ENCODE measurements at regions of chr12 and their contacts with region 1.

Region 1: DNA sequence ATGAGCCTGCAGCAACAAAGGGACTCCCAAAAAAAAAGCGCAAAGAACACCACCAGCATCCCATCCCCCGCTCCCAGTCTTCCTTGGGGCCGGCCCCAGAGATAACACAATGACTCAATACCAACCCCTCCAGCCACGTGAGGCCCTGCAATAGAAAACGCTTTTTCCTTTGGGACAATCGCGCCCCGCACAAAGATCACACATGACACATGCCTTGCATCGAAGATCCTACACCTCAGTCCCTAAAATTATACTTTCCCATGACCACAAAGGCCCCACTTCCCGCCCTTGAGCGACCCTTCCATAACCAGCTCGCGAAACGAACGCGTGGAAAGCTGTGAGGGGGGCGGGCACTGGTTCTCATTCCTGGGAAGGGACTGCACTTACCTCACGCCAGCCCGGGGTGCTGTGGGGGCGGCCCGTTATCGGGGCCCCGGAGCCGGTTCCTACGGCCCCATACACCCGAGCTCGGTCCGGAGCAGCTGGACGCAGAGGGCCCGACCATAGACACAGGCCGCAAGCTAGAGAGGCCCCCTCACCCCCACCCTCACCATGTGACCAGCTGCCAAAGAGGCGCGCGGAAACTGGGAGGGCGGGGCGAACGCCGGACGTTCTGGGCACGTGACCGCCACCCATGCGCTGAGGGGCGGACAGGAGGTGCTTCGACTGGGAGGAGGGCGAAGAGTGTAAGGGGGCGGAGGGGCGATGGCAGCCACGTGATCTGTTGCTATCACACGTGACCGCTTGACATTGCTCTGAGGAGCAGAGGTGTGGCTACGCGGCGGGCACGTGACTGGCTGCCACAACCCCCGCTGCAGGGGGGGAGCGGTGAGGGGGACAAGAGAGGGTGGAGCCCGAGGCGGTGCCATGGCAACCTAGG is at the start of gene CDK4:
- DNase-seq: peak; percentile 99
- ATAC-seq: peak; percentile 85
- H3K4me3 ChIP-seq: peak within 1 kb of the TSS; percentile 79
- H3K27ac ChIP-seq: peak within 1 kb of the TSS; percentile 94
- H3K4me1 ChIP-seq: peaks cover 27% of the 10 kb centered on the region
- H3K27me3 ChIP-seq: no peaks in the 10 kb centered on the region
- CTCF ChIP-seq: no peak
- EP300 ChIP-seq: peak in 1 of 2 experiments; percentile 77; a peak in 2 of 4 replicates
- POLR2A ChIP-seq: peak; percentile 94
- RAD21 ChIP-seq: no peak
- polyA plus RNA-seq, gene CDK4: 26.1 to 45.7 TPM

Region 2: DNA sequence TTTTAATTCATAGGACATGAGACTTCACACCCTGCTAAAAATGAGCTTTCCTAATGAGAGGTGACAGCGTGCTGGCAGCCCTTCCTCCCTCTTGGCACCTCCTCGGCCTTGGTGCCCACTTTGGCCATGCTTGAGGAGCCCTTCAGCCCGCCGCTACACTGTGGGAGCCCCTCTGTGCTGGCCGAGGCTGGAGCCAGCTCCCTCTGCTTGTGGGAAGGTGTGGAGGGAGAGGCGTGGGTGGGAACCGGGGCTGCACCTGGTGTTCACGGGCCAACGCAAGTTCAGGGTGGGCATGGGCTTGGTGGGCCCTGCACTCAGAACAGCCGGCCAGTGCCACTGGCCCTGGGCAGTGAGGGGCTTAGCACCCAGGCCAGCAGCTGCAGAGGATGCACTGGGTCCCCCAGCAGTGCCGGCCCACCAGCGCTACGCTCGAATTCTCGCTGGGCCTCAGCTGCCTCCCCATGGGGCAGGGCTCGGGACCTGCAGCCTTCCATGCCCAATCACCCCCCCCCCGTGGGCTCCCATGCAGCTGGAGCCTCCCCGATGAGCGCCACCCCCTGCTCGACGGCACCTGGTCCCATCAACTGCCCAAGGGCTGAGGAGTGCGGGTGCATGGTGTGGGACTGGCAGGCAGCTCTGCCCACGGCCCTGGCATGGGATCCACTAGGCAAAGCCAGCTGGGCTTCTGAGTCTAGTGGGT is 96.3 kb before region 1 on chr12:
- CTCF ChIA-PET with region 1: no interaction called
- POLR2A ChIA-PET with region 1: no interaction called
- RAD21 ChIA-PET with region 1: no interaction called
- SMC1A ChIA-PET with region 1: no interaction called
- in situ Hi-C with region 1: no loop called
- intact Hi-C with region 1: no loop called
- DNase-seq: no peak
- ATAC-seq: no peak
- H3K4me3 ChIP-seq: no peak overlapping the region
- H3K27ac ChIP-seq: no peak overlapping the region
- H3K4me1 ChIP-seq: no peaks in the 10 kb centered on the region
- H3K27me3 ChIP-seq: no peaks in the 10 kb centered on the region
- CTCF ChIP-seq: no peak
- EP300 ChIP-seq: no peak
- POLR2A ChIP-seq: no peak
- RAD21 ChIP-seq: no peak

Region 3: DNA sequence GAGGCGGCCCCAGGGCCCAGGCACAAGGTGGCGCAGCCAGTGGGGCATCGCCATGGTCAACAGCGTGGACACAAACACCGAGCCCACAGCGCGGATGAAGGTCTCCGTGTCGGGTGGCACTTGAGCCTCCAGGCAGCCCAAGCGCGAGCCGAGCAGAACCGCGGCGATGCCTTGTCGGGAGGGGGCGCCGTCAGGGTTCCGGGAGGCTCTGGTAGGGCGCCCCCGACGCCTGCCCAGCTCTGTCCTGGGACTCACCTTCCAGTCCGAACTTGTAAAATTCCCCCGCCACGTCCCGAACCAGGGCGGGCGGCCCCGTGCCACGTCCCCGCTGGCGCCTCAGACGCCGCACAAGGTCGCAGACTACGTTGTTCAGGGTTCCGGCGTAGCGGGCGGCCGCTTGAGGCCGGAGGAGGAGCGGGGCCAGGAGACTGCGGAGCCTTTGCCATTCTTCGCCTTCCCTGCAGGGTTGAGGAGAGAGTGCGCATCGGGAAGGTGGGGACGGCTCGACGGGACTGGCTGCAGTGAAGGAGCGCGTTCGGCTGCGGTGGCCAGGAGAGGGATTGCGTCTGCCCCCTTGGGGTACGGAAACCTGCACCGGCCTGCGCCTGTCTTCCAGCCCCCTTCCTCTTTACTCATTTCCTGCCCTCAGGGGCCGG is 13.1 kb after region 1 on chr12:
- CTCF ChIA-PET with region 1: interaction called, 62 read pairs
- POLR2A ChIA-PET with region 1: interaction called, 5 read pairs
- RAD21 ChIA-PET with region 1: no interaction called
- SMC1A ChIA-PET with region 1: interaction called, 5 read pairs
- in situ Hi-C with region 1: no loop called
- intact Hi-C with region 1: no loop called
- DNase-seq: no peak
- ATAC-seq: peak; percentile 84
- H3K4me3 ChIP-seq: peak overlapping the region; percentile 65; the same call in 1 of the 2 replicates
- H3K27ac ChIP-seq: no peak overlapping the region
- H3K4me1 ChIP-seq: peaks cover 22% of the 10 kb centered on the region
- H3K27me3 ChIP-seq: peaks cover 11 to 23% of the 10 kb centered on the region in 2 experiments; a peak in 3 of 4 replicates
- CTCF ChIP-seq: peak; percentile 35 to 45 (median 42)
- EP300 ChIP-seq: no peak
- POLR2A ChIP-seq: peak; percentile 56; the same call in 1 of the 2 replicates
- RAD21 ChIP-seq: no peak

Region 4: GRCh38 chr12:57782608-57783465 is 30.8 kb after region 1 on chr12 and contains the start of gene TSFM:
- CTCF ChIA-PET with region 1: interaction called, 16 read pairs
- POLR2A ChIA-PET with region 1: interaction called, 4 read pairs
- RAD21 ChIA-PET with region 1: interaction called, 3 read pairs
- SMC1A ChIA-PET with region 1: interaction called, 6 read pairs
- in situ Hi-C with region 1: no loop called
- intact Hi-C with region 1: no loop called
- DNase-seq: peak; percentile 68
- ATAC-seq: peak; percentile 96
- H3K4me3 ChIP-seq: peak within 1 kb of the TSS; percentile 98
- H3K27ac ChIP-seq: peak within 1 kb of the TSS; percentile 61
- H3K4me1 ChIP-seq: peaks cover 8% of the 10 kb centered on the region; the same call in 1 of the 2 replicates
- H3K27me3 ChIP-seq: no peaks in the 10 kb centered on the region
- CTCF ChIP-seq: peak; percentile 87 to 96 (median 96)
- EP300 ChIP-seq: no peak
- POLR2A ChIP-seq: peak; percentile 96
- RAD21 ChIP-seq: peak; percentile 27; the same call in 1 of the 2 replicates
- polyA plus RNA-seq, gene TSFM: 113 to 132 TPM

Region 5: GRCh38 chr12:57836442-57837375 is 84.7 kb after region 1 on chr12:
- CTCF ChIA-PET with region 1: interaction called, 9 read pairs
- POLR2A ChIA-PET with region 1: no interaction called
- RAD21 ChIA-PET with region 1: interaction called, 3 read pairs
- SMC1A ChIA-PET with region 1: interaction called, 3 read pairs
- in situ Hi-C with region 1: no loop called
- intact Hi-C with region 1: loop called (anchors 5 kb)
- DNase-seq: no peak
- ATAC-seq: peak; percentile 63
- H3K4me3 ChIP-seq: peak overlapping the region; percentile 46
- H3K27ac ChIP-seq: peak overlapping the region; percentile 75
- H3K4me1 ChIP-seq: peaks cover 91% of the 10 kb centered on the region
- H3K27me3 ChIP-seq: no peaks in the 10 kb centered on the region
- CTCF ChIP-seq: no peak
- EP300 ChIP-seq: no peak
- POLR2A ChIP-seq: peak; percentile 45; the same call in 1 of the 2 replicates
- RAD21 ChIP-seq: 0 out of 2 replicates have a peak, but pooled peaks have one; percentile 11

Region 6: GRCh38 chr12:57904848-57905811 is 153.1 kb after region 1 on chr12:
- CTCF ChIA-PET with region 1: interaction called, 28 read pairs
- POLR2A ChIA-PET with region 1: interaction called, 3 read pairs
- RAD21 ChIA-PET with region 1: no interaction called
- SMC1A ChIA-PET with region 1: interaction called, 4 read pairs
- in situ Hi-C with region 1: no loop called
- intact Hi-C with region 1: no loop called
- DNase-seq: peak; percentile 46
- ATAC-seq: peak; percentile 97
- H3K4me3 ChIP-seq: no peak overlapping the region
- H3K27ac ChIP-seq: no peak overlapping the region
- H3K4me1 ChIP-seq: peaks cover 4% of the 10 kb centered on the region
- H3K27me3 ChIP-seq: peaks cover 0 to 2% of the 10 kb centered on the region in 2 experiments; a peak in 2 of 4 replicates
- CTCF ChIP-seq: peak; percentile 100; a peak in 5 of 6 replicates
- EP300 ChIP-seq: no peak
- POLR2A ChIP-seq: no peak
- RAD21 ChIP-seq: peak; percentile 99

Measured in GM12878 (cell line).